CD8-positive, alpha-beta T cell (primary cell): ENCODE measurements at regions of chr4 and their contacts with region 1.

Region 1: GRCh38 chr4:152485726-152486276 is 50.1 kb downstream of the FBXW7 start:
- DNase-seq: peak in 5 of 9 experiments; percentile 8 to 80 (median 29)
- ATAC-seq: peak; percentile 97
- H3K4me3 ChIP-seq: no peak overlapping the region
- H3K4me3 Mint-ChIP-seq: no peak overlapping the region
- H3K27ac ChIP-seq: no peak overlapping the region
- H3K27ac Mint-ChIP-seq: peak overlapping the region; percentile 35
- H3K4me1 ChIP-seq: peaks cover 13% of the 10 kb centered on the region
- H3K4me1 Mint-ChIP-seq: peaks cover 44% of the 10 kb centered on the region
- H3K27me3 ChIP-seq: no peaks in the 10 kb centered on the region
- H3K27me3 Mint-ChIP-seq: no peaks in the 10 kb centered on the region
- CTCF ChIP-seq: no peak

Region 2: DNA sequence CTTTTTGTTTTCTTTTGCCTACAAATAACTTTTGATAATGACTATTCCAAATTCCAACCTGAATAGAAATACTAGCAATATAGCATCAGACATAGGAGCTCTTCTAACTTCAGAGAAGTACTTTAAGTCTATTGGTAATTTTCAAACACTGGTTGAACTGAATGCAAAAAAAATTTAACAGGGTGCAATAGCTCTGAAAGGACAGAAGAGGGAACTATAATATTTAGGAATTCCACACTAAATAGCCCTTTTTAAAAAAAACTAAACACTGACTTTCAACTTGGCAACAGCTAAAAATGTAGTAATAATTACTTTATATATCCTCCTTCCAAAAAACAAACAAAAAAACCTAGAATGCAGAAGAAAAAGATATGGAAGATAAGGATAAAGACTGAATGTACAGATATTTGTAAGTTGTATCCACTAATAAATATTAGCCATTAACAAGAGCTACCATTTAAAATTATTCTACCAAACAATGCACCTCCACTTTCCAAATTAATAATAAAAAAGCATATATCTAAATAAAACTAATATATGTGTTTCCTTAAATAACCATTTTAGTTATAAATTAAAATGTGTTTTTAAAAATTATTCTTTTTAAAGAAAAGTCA is 31.3 kb before region 1 on chr4:
- CTCF ChIA-PET with region 1: no interaction called
- POLR2A ChIA-PET with region 1: no interaction called
- intact Hi-C with region 1: loop called in 1 of 2 experiments (anchors 2 kb)
- DNase-seq: peak in 1 of 9 experiments; percentile 21
- ATAC-seq: peak; percentile 36
- H3K4me3 ChIP-seq: no peak overlapping the region
- H3K4me3 Mint-ChIP-seq: no peak overlapping the region
- H3K27ac ChIP-seq: no peak overlapping the region
- H3K27ac Mint-ChIP-seq: no peak overlapping the region
- H3K4me1 ChIP-seq: peaks cover 13% of the 10 kb centered on the region
- H3K4me1 Mint-ChIP-seq: peaks cover 37% of the 10 kb centered on the region
- H3K27me3 ChIP-seq: no peaks in the 10 kb centered on the region
- H3K27me3 Mint-ChIP-seq: no peaks in the 10 kb centered on the region
- CTCF ChIP-seq: peak; percentile 62

Region 3: GRCh38 chr4:152468408-152468807 is 17.4 kb before region 1 on chr4:
- CTCF ChIA-PET with region 1: no interaction called
- POLR2A ChIA-PET with region 1: no interaction called
- intact Hi-C with region 1: no loop called
- DNase-seq: no peak
- ATAC-seq: no peak
- H3K4me3 ChIP-seq: no peak overlapping the region
- H3K4me3 Mint-ChIP-seq: no peak overlapping the region
- H3K27ac ChIP-seq: no peak overlapping the region
- H3K27ac Mint-ChIP-seq: no peak overlapping the region
- H3K4me1 ChIP-seq: peaks cover 18% of the 10 kb centered on the region
- H3K4me1 Mint-ChIP-seq: peaks cover 39% of the 10 kb centered on the region
- H3K27me3 ChIP-seq: no peaks in the 10 kb centered on the region
- H3K27me3 Mint-ChIP-seq: no peaks in the 10 kb centered on the region
- CTCF ChIP-seq: no peak